Natural killer cell (primary cell): ENCODE measurements at regions of chr5 and their contacts with region 1.

Region 1: GRCh38 chr5:142012792-142013388 is at the start of gene GNPDA1:
- DNase-seq: peak; percentile 80 to 85
- ATAC-seq: peak; percentile 76 to 94 (median 92)
- H3K4me3 ChIP-seq: peak within 1 kb of the TSS; percentile 78
- H3K4me3 Mint-ChIP-seq: peak within 1 kb of the TSS; percentile 75
- H3K27ac ChIP-seq: peak within 1 kb of the TSS; percentile 63
- H3K27ac Mint-ChIP-seq: peak within 1 kb of the TSS; percentile 61 to 89
- H3K4me1 ChIP-seq: peaks cover 55% of the 10 kb centered on the region
- H3K4me1 Mint-ChIP-seq: peaks cover 35 to 55% of the 10 kb centered on the region in 2 donors
- H3K27me3 ChIP-seq: no peaks in the 10 kb centered on the region
- H3K27me3 Mint-ChIP-seq: no peaks in the 10 kb centered on the region
- CTCF ChIP-seq: no peak
- total RNA-seq, gene GNPDA1: 10.7 to 12.0 (median 11.2) TPM

Region 2: DNA sequence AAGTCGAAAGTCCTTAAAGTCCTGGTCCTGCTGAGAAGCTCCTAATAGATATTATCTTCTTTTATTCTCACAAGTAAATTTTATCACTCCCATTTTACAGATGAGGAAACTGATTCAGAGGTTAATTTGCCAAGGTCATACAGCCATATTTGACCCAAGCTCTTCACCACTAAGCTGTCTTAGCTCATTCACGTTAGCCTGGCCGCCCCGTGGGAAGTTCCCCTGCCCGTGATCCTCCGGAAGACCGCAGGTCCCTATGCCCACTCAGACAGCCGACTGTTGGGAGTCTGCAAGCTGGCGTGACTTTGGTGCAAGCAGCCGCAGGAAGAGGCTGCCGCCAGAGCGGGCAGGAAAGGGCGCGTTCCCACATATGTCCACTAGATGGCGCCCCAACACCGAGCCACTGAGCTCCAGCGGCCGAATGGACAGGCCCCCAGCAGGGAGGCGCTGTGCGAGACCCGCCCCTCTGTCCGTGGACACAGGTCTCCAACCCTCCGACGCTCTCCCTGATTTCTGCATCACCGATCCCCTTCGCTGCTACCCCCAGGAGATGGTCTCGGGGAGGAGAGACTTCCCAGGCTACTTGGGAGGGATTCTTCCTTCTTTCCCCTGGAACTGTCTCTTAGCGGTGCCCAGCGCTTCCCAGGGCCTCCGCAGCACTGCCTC is 320.9 kb before region 1 on chr5:
- intact Hi-C with region 1: loop called (anchors 5 kb)
- DNase-seq: peak; percentile 88 to 89
- ATAC-seq: peak; percentile 95 to 99 (median 99)
- H3K4me3 ChIP-seq: no peak overlapping the region
- H3K4me3 Mint-ChIP-seq: peak overlapping the region; percentile 42
- H3K27ac ChIP-seq: no peak overlapping the region
- H3K27ac Mint-ChIP-seq: peak overlapping the region in 1 of 2 donors; percentile 83
- H3K4me1 ChIP-seq: peaks cover 22% of the 10 kb centered on the region
- H3K4me1 Mint-ChIP-seq: peaks cover 13 to 15% of the 10 kb centered on the region in 2 donors
- H3K27me3 ChIP-seq: no peaks in the 10 kb centered on the region
- H3K27me3 Mint-ChIP-seq: peaks cover 3 to 11% of the 10 kb centered on the region in 2 donors
- CTCF ChIP-seq: peak; percentile 95

Region 3: DNA sequence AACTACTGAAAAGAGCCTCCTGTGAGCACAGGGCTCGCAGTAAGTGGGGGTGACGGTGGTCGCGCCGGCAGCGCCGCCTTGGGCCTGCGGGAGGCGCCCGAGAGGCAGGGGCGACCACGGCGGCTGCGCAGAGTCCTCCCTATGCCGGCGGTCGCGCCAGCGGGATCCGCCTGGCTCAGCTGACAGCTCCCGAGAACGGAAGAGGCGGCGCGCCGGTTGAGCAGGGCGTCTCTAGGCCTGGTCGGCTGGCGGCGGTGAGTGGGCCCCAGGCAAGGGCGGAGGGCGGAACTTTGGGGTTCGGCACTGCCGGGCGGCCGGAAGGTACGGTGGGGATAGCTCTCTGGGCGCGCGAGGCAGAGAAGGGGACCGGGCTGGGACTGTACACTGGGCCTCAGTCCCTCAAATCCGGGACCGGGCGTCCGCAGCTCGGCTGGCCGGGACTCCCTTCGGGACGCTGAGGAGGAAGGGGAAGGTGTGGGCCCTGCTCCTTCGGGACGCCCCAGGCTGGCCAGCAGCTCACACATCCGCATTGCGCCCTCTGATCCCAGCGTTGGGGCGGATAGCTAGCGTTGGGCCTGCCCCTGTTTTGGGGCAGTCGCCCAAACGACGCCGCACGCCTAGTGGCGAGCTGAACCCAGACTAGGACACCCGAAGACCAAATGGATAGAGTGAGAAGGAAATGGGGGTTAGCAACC is 43.8 kb before region 1 on chr5 and contains the start of gene RNF14:
- intact Hi-C with region 1: loop called (anchors 10 kb)
- DNase-seq: peak; percentile 92 to 96
- ATAC-seq: peak; percentile 94 to 97 (median 95)
- H3K4me3 ChIP-seq: peak within 1 kb of the TSS; percentile 97
- H3K4me3 Mint-ChIP-seq: peak within 1 kb of the TSS; percentile 99
- H3K27ac ChIP-seq: peak within 1 kb of the TSS; percentile 98
- H3K27ac Mint-ChIP-seq: peak within 1 kb of the TSS; percentile 96 to 98
- H3K4me1 ChIP-seq: peaks cover 12% of the 10 kb centered on the region
- H3K4me1 Mint-ChIP-seq: peaks cover 27 to 30% of the 10 kb centered on the region in 2 donors
- H3K27me3 ChIP-seq: no peaks in the 10 kb centered on the region
- H3K27me3 Mint-ChIP-seq: no peaks in the 10 kb centered on the region
- CTCF ChIP-seq: peak; percentile 97
- total RNA-seq, gene RNF14: 20.6 to 29.2 (median 21.3) TPM

Region 4: DNA sequence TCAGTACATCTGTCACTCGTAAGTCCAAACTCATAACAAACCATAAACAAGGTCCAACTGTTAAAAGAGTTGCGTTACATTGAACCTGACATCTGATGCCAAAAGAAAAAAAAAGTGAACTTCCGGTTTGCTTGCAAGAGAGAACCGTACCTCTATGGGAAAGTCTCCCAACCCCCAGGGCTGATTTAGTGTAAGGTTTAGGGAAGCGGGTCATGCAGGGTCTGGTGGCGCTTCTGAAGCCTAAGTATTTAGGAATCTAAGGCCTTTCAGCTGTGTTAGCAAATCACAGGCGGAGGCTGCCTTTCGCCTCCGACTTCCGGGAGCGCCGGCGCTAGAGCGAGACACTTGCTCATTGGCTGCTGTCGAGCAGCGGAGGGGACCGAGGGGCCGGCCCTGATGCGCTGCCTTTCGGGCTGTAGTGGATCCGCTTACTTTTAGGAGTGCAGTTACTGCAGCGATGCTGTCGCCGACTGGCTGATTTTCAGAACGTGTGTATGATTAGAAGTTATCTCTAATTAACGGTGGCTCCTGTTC is 11.9 kb after region 1 on chr5:
- intact Hi-C with region 1: loop called (anchors 1 kb)
- DNase-seq: peak; percentile 70 to 90
- ATAC-seq: peak; percentile 99 to 100 (median 100)
- H3K4me3 ChIP-seq: peak overlapping the region; percentile 46
- H3K4me3 Mint-ChIP-seq: peak overlapping the region; percentile 91
- H3K27ac ChIP-seq: peak overlapping the region; percentile 93
- H3K27ac Mint-ChIP-seq: peak overlapping the region; percentile 93 to 94
- H3K4me1 ChIP-seq: no peaks in the 10 kb centered on the region
- H3K4me1 Mint-ChIP-seq: peaks cover 14 to 15% of the 10 kb centered on the region in 2 donors
- H3K27me3 ChIP-seq: peaks cover 5% of the 10 kb centered on the region
- H3K27me3 Mint-ChIP-seq: peaks cover 0 to 2% of the 10 kb centered on the region in 2 donors
- CTCF ChIP-seq: no peak

Region 5: GRCh38 chr5:142034994-142035393 is 22.1 kb after region 1 on chr5:
- intact Hi-C with region 1: no loop called
- DNase-seq: peak in 1 of 2 donors; percentile 20
- ATAC-seq: no peak
- H3K4me3 ChIP-seq: no peak overlapping the region
- H3K4me3 Mint-ChIP-seq: no peak overlapping the region
- H3K27ac ChIP-seq: no peak overlapping the region
- H3K27ac Mint-ChIP-seq: no peak overlapping the region
- H3K4me1 ChIP-seq: no peaks in the 10 kb centered on the region
- H3K4me1 Mint-ChIP-seq: no peaks in the 10 kb centered on the region
- H3K27me3 ChIP-seq: no peaks in the 10 kb centered on the region
- H3K27me3 Mint-ChIP-seq: peaks cover 15 to 47% of the 10 kb centered on the region in 2 donors
- CTCF ChIP-seq: no peak

Region 6: DNA sequence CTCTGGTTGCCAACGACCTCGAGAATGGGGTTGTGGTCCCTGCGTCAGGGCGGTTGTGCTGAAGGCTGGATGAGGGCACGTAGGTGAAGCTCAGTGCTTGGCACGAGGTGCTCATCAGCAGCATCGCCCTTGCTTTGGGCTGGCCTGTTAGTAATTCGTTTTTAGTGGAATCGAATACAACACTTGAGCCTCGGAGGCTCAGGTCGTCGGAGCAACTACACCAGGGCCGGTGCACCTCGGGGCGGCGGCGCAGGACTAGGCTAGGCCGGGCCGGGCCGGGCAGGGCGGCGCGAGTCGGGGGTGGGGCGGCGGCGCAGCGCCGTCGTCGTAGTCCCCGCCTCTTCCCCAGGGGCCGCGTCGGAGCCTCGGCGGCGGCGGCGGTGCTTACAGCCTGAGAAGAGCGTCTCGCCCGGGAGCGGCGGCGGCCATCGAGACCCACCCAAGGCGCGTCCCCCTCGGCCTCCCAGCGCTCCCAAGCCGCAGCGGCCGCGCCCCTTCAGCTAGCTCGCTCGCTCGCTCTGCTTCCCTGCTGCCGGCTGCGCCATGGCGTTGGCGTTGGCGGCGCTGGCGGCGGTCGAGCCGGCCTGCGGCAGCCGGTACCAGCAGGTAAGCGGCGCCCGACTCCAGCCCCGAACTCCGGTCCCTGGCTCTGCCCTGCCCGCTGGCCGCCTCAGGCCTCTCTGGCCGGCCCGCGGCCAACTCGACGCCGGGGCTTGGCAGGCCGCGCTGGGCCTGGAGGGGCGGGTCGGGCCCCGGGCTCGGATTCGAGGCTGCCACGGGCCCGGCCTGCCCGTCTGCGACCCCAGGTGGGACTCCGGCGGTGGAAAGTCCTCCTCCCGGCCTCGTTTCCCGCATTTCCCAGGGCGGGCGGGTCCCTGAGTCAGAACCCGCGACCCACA is 95.8 kb after region 1 on chr5 and contains the start of gene NDFIP1:
- intact Hi-C with region 1: loop called (anchors 5 kb)
- DNase-seq: peak; percentile 82 to 91
- ATAC-seq: peak; percentile 95 to 99 (median 96)
- H3K4me3 ChIP-seq: peak within 1 kb of the TSS; percentile 66
- H3K4me3 Mint-ChIP-seq: peak within 1 kb of the TSS; percentile 96
- H3K27ac ChIP-seq: peak within 1 kb of the TSS; percentile 93
- H3K27ac Mint-ChIP-seq: peak within 1 kb of the TSS; percentile 85 to 87
- H3K4me1 ChIP-seq: peaks cover 15% of the 10 kb centered on the region
- H3K4me1 Mint-ChIP-seq: peaks cover 37 to 42% of the 10 kb centered on the region in 2 donors
- H3K27me3 ChIP-seq: no peaks in the 10 kb centered on the region
- H3K27me3 Mint-ChIP-seq: peaks cover 4 to 12% of the 10 kb centered on the region in 2 donors
- CTCF ChIP-seq: peak; percentile 12
- total RNA-seq, gene NDFIP1: 45.4 to 57.6 (median 51.7) TPM